ENCODE measurements at regions of chr3 and their contacts with region 1.

Region 1: DNA sequence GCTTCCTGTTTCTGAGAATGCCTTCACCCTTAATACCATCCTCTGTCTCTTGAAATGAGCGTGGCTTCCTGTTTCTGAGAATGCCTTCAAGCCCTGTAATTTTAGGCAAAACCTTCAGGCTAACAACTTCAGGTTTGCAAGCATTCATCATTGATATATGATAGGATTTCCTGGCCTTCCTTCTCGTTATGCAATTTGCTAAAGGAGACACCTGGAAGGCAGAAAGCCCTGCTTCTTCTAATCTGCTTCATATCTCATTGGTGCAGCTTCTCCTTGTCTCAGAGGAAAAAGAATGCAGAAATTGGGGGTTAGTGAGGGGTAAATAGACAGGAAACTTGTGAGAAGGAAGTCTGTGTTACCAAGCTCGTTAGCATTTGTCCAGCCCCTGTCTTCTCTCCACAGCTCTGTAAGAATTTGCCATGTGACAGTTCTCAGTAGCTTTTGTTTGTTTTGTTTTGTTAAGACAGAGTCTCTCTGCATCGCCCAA is 7.3 kb downstream of the ARL6IP5 start:
- DNase-seq: peak in 1 of 4 experiments; percentile 11
- ATAC-seq: no peak; the same call in 2 of the 3 replicates
- H3K4me3 ChIP-seq: no peak overlapping the region
- H3K27ac ChIP-seq: no peak overlapping the region
- H3K4me1 ChIP-seq: peaks cover 3 to 9% of the 10 kb centered on the region in 2 experiments; a peak in 4 of 5 replicates
- H3K27me3 ChIP-seq: no peaks in the 10 kb centered on the region
- CTCF ChIP-seq: no peak
- EP300 ChIP-seq: no peak
- POLR2A ChIP-seq: no peak
- RAD21 ChIP-seq: no peak

Region 2: GRCh38 chr3:68436619-68437401 is 655.3 kb before region 1 on chr3:
- CTCF ChIA-PET with region 1: no interaction called
- POLR2A ChIA-PET with region 1: no interaction called
- in situ Hi-C with region 1: no loop called
- intact Hi-C with region 1: no loop called
- DNase-seq: no peak
- ATAC-seq: no peak
- H3K4me3 ChIP-seq: no peak overlapping the region
- H3K27ac ChIP-seq: no peak overlapping the region
- H3K4me1 ChIP-seq: no peaks in the 10 kb centered on the region
- H3K27me3 ChIP-seq: no peaks in the 10 kb centered on the region
- CTCF ChIP-seq: no peak
- EP300 ChIP-seq: no peak
- POLR2A ChIP-seq: no peak
- RAD21 ChIP-seq: no peak

Region 3: GRCh38 chr3:69102384-69102783 is 10.3 kb after region 1 on chr3:
- CTCF ChIA-PET with region 1: no interaction called
- POLR2A ChIA-PET with region 1: interaction called, 17 read pairs
- in situ Hi-C with region 1: no loop called
- intact Hi-C with region 1: no loop called
- DNase-seq: no peak
- ATAC-seq: no peak
- H3K4me3 ChIP-seq: no peak overlapping the region
- H3K27ac ChIP-seq: no peak overlapping the region
- H3K4me1 ChIP-seq: 0 out of 5 replicates have a peak, but pooled peaks cover 0 to 5% of the 10 kb centered on the region in 2 experiments
- H3K27me3 ChIP-seq: no peaks in the 10 kb centered on the region
- CTCF ChIP-seq: no peak
- EP300 ChIP-seq: no peak
- POLR2A ChIP-seq: no peak
- RAD21 ChIP-seq: no peak